ENCODE measurements at regions of chr9 and their contacts with region 1.

Region 1: GRCh38 chr9:98848450-98849149 is 41.1 kb downstream of the GALNT12 start:
- DNase-seq: peak; percentile 59
- ATAC-seq: peak; percentile 97
- H3K4me3 Mint-ChIP-seq: no peak overlapping the region
- H3K27ac Mint-ChIP-seq: no peak overlapping the region
- H3K4me1 Mint-ChIP-seq: no peaks in the 10 kb centered on the region
- H3K27me3 Mint-ChIP-seq: no peaks in the 10 kb centered on the region
- CTCF ChIP-seq: peak; percentile 59

Region 2: DNA sequence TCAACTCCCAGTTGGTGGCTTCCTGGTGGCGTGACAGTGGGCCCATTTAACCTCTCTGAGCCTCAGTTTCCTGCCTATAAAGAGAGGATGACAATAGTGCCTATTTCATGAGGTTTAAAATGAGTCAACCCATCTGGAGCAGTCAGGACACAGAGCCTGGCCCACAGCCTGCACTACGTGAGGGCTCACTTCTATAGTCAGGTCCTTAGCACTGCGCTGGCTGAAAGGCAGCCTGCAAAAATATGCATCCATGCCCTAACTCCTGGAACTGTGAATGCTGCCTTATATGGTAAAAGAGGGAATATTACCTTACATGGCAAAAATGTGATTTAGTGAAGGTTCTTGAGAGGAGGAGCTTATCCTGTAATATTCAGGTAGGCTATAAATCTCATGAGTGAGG is 238.4 kb before region 1 on chr9:
- CTCF ChIA-PET with region 1: no interaction called
- POLR2A ChIA-PET with region 1: no interaction called
- intact Hi-C with region 1: no loop called
- DNase-seq: no peak
- ATAC-seq: no peak
- H3K4me3 Mint-ChIP-seq: no peak overlapping the region
- H3K27ac Mint-ChIP-seq: no peak overlapping the region
- H3K4me1 Mint-ChIP-seq: no peaks in the 10 kb centered on the region
- H3K27me3 Mint-ChIP-seq: peaks cover 9% of the 10 kb centered on the region
- CTCF ChIP-seq: no peak

Region 3: DNA sequence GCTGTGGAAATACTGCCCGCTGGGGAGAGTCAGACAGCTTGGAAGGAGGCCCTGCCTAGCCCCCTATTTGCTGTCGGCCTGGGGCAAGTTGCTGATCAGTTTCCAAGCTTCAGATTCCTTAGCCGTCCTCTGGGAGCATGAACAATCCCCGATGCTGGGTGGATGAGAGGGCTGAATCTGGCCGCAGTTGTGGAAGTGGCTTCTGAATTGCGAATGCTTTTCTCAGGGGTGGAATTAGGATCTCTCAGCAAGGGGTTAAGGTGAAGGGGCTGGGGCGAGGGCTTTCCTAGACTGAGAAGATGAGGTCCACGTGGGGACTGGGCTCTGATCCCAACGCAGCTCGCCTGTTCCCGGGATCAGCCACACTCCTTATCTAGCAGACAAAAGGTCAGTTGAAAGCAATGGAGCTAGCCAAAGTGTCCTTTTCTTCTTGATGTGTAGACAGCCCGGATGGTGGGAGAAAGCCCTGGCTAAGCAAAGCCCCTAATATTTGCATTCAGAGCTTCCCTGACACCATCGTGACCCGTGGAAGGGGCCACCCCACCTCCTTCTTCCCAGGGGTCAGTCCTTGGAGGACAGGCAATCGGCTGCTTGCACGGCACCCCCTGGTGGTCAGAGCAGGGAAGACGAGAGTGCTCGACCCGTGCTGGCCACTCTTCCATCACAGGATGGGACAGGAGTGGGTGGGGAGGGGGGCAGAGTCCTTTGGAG is 150.0 kb after region 1 on chr9:
- CTCF ChIA-PET with region 1: interaction called, 22 read pairs
- POLR2A ChIA-PET with region 1: no interaction called
- intact Hi-C with region 1: loop called (anchors 1 kb)
- DNase-seq: peak; percentile 57
- ATAC-seq: peak; percentile 74
- H3K4me3 Mint-ChIP-seq: no peak overlapping the region
- H3K27ac Mint-ChIP-seq: no peak overlapping the region
- H3K4me1 Mint-ChIP-seq: peaks cover 21% of the 10 kb centered on the region
- H3K27me3 Mint-ChIP-seq: peaks cover 2% of the 10 kb centered on the region
- CTCF ChIP-seq: peak; percentile 67

Region 4: GRCh38 chr9:100011062-100011681 is 1162.6 kb after region 1 on chr9:
- CTCF ChIA-PET with region 1: no interaction called
- POLR2A ChIA-PET with region 1: no interaction called
- intact Hi-C with region 1: loop called (anchors 5 kb)
- DNase-seq: no peak
- ATAC-seq: peak; percentile 62
- H3K4me3 Mint-ChIP-seq: no peak overlapping the region
- H3K27ac Mint-ChIP-seq: no peak overlapping the region
- H3K4me1 Mint-ChIP-seq: no peaks in the 10 kb centered on the region
- H3K27me3 Mint-ChIP-seq: no peaks in the 10 kb centered on the region
- CTCF ChIP-seq: no peak

Region 5: DNA sequence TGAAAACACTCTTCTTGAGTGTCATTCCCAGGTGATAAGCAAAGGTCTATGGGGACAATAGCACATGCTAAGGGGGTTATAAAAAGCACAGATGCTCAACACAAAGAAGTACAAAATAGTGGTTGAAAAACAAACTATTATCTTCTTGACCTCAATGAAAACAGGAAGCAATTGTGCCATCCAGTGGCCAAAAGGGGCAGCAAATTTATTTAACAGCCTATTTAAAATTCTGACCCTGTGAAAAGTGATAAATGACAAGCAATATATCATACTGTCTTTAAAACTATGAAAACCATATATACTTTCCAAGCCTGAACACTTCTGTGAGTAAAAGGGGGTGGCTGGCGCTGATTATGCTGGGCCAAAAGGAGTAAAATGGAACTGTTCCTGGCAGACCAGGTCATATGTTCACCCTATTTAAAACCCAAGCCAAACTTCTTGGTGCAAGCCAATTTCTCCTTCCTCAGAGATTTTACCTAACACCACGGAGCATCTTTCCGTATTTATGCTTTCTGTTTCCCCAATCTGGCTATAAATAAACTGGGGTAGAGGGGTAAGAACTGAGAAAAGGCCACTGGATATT is 1474.4 kb after region 1 on chr9:
- CTCF ChIA-PET with region 1: interaction called, 4 read pairs
- POLR2A ChIA-PET with region 1: no interaction called
- intact Hi-C with region 1: loop called (anchors 2 kb)
- DNase-seq: no peak
- ATAC-seq: no peak
- H3K4me3 Mint-ChIP-seq: no peak overlapping the region
- H3K27ac Mint-ChIP-seq: no peak overlapping the region
- H3K4me1 Mint-ChIP-seq: peaks cover 2% of the 10 kb centered on the region
- H3K27me3 Mint-ChIP-seq: no peaks in the 10 kb centered on the region
- CTCF ChIP-seq: no peak